ENCODE measurements at regions of chr11 and their contacts with region 1.

Region 1: GRCh38 chr11:2208691-2209369 is 37.2 kb upstream of the TH start:
- DNase-seq: peak; percentile 58 to 65
- H3K4me3 ChIP-seq: no peak overlapping the region
- H3K4me3 Mint-ChIP-seq: peak overlapping the region; percentile 6
- H3K27ac Mint-ChIP-seq: peak overlapping the region; percentile 75
- H3K4me1 ChIP-seq: peaks cover 82% of the 10 kb centered on the region
- H3K4me1 Mint-ChIP-seq: peaks cover 58% of the 10 kb centered on the region
- H3K27me3 ChIP-seq: no peaks in the 10 kb centered on the region
- H3K27me3 Mint-ChIP-seq: no peaks in the 10 kb centered on the region
- CTCF ChIP-seq: peak in 1 of 2 experiments; percentile 41

Region 2: DNA sequence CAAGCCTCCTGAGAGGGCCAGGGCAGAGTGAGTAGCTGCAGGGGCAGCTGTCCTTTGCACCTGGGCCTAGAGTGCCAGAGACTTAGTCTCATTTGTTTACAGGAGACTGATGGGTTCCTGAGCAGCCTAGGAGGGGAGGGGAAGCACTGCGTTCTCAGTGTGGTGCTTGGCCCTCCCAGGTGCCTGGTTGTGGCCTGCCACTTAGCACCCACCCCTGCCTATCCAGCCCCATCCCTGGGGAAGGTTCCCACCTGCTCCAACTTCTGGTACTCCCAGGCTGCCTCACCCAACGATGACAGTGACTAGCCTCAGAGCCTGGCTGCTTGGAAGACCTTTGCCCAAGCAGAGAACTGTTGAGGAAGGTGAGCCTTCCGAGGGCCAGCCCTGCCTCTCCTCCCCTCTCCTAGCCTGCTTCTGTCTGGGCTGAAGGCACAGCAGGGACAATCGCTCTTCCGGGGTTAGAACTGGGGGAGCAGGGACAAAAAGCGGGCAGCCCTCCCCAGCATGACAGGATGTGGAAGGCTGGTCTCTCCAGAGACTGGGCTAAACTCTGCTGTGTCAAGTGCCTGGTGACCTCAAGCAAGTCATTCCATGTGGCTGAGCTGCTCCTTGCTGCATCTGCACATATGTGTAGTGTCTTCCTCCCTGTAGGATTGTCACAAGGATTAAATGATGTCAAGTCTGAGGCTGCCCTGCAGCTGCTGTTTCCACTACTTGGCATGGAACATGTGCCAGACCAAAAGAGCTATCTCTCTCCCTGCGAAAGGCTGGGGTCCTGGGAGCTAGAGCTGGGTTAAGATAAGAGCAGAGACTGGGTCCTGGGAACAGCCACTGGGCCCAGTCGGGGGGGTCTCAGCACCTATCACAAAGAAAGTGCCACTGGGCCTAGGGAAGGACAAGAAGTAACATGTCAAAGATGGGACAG is 481.1 kb after region 1 on chr11:
- CTCF ChIA-PET with region 1: no interaction called
- POLR2A ChIA-PET with region 1: no interaction called
- intact Hi-C with region 1: no loop called
- DNase-seq: peak in 1 of 2 experiments; percentile 33
- H3K4me3 ChIP-seq: no peak overlapping the region
- H3K4me3 Mint-ChIP-seq: no peak overlapping the region
- H3K27ac Mint-ChIP-seq: no peak overlapping the region
- H3K4me1 ChIP-seq: peaks cover 11% of the 10 kb centered on the region
- H3K4me1 Mint-ChIP-seq: peaks cover 20% of the 10 kb centered on the region
- H3K27me3 ChIP-seq: no peaks in the 10 kb centered on the region
- H3K27me3 Mint-ChIP-seq: no peaks in the 10 kb centered on the region
- CTCF ChIP-seq: no peak

Region 3: GRCh38 chr11:2912498-2912897 is 703.7 kb after region 1 on chr11:
- CTCF ChIA-PET with region 1: no interaction called
- POLR2A ChIA-PET with region 1: no interaction called
- intact Hi-C with region 1: loop called (anchors 10 kb)
- DNase-seq: peak; percentile 93 to 94
- H3K4me3 ChIP-seq: no peak overlapping the region
- H3K4me3 Mint-ChIP-seq: no peak overlapping the region
- H3K27ac Mint-ChIP-seq: peak overlapping the region; percentile 80
- H3K4me1 ChIP-seq: peaks cover 33% of the 10 kb centered on the region
- H3K4me1 Mint-ChIP-seq: peaks cover 22% of the 10 kb centered on the region
- H3K27me3 ChIP-seq: no peaks in the 10 kb centered on the region
- H3K27me3 Mint-ChIP-seq: no peaks in the 10 kb centered on the region
- CTCF ChIP-seq: no peak